T-cell (primary cell): ENCODE measurements at regions of chr4 and their contacts with region 1.

Region 1: DNA sequence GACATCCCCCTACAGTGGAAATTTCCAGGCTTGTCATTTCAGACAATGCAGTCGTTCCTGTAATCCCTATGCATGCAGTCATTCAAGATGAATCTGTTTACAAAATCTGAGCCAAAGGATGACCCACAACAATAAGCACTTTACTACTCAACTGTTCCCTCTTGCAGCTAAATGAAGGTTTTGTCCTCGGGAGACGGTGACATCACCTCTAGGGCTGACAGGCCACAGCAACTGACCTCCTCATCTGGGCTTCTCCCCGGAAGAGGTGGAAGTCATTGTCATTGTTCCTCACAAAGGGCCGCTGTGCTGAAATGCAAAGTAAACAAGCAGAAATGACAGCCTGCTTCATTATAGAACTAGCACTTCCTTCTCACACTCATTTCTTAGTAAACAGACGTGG is 29.2 kb downstream of the CLRN2 start:
- DNase-seq: no peak
- ATAC-seq: no peak
- H3K4me3 ChIP-seq: no peak overlapping the region
- H3K4me3 Mint-ChIP-seq: no peak overlapping the region
- H3K27ac ChIP-seq: no peak overlapping the region
- H3K27ac Mint-ChIP-seq: no peak overlapping the region
- H3K4me1 ChIP-seq: no peaks in the 10 kb centered on the region
- H3K4me1 Mint-ChIP-seq: peaks cover 1 to 5% (median 1%) of the 10 kb centered on the region in 3 donors
- H3K27me3 ChIP-seq: no peaks in the 10 kb centered on the region
- H3K27me3 Mint-ChIP-seq: peaks cover 18 to 22% of the 10 kb centered on the region in 2 donors

Region 2: DNA sequence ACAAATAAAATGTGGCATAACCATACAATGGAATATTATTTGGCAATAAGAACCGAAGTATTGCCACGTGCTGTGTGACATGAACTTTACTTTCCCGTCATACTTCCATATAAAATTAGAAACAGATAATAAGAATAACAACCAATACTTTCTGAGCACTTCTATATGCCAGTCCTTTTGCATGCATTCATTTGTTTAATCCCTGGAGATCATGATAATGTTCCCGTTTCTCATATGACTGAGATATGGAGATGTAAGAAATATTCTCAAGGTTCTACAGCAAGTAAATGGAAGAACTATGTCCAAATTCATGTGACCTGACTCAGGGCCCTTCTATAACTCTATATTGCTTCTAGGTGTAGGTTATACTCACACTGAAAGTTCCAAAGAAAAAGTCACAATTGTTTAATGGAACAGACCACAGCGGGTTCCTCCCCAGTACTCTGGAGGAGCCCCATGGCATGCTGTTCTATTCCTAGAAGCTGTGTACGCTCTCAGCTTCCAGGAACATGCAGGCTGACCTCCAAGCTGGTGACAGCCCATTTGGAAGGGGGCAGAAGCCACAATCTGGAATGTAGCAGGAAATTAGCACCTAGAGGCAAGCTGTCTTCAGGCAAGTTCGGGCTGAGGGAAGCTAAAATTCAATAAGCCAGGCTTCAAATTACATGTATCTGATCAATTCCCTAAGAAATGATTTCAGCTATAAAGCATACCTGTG is 63.8 kb before region 1 on chr4:
- CTCF ChIA-PET with region 1: no interaction called
- POLR2A ChIA-PET with region 1: no interaction called
- DNase-seq: no peak
- ATAC-seq: no peak
- H3K4me3 ChIP-seq: no peak overlapping the region
- H3K4me3 Mint-ChIP-seq: no peak overlapping the region
- H3K27ac ChIP-seq: no peak overlapping the region
- H3K27ac Mint-ChIP-seq: no peak overlapping the region
- H3K4me1 ChIP-seq: no peaks in the 10 kb centered on the region
- H3K4me1 Mint-ChIP-seq: peaks cover 0 to 2% (median 0%) of the 10 kb centered on the region in 3 donors
- H3K27me3 ChIP-seq: no peaks in the 10 kb centered on the region
- H3K27me3 Mint-ChIP-seq: no peaks in the 10 kb centered on the region

Region 3: GRCh38 chr4:17576932-17577665 is 32.9 kb after region 1 on chr4 and contains the start of gene LAP3:
- CTCF ChIA-PET with region 1: interaction called, 8 to 10 read pairs
- POLR2A ChIA-PET with region 1: interaction called in 1 of 2 experiments, 3 read pairs
- DNase-seq: peak; percentile 93 to 100 (median 98)
- ATAC-seq: peak; percentile 90 to 94 (median 93)
- H3K4me3 ChIP-seq: peak within 1 kb of the TSS; percentile 72 to 91
- H3K4me3 Mint-ChIP-seq: peak within 1 kb of the TSS; percentile 85 to 93 (median 89)
- H3K27ac ChIP-seq: peak within 1 kb of the TSS; percentile 85
- H3K27ac Mint-ChIP-seq: peak within 1 kb of the TSS; percentile 92 to 98
- H3K4me1 ChIP-seq: peaks cover 9 to 27% of the 10 kb centered on the region in 2 experiments
- H3K4me1 Mint-ChIP-seq: peaks cover 27 to 33% (median 28%) of the 10 kb centered on the region in 3 donors
- H3K27me3 ChIP-seq: no peaks in the 10 kb centered on the region
- H3K27me3 Mint-ChIP-seq: no peaks in the 10 kb centered on the region
- total RNA-seq, gene LAP3: 23.5 to 58.4 (median 25.1) TPM

Region 4: GRCh38 chr4:17614416-17615299 is 70.5 kb after region 1 on chr4 and contains the start of gene MED28:
- CTCF ChIA-PET with region 1: interaction called, 5 to 18 read pairs
- POLR2A ChIA-PET with region 1: no interaction called
- DNase-seq: peak; percentile 84 to 98 (median 93)
- ATAC-seq: peak; percentile 91 to 96 (median 95)
- H3K4me3 ChIP-seq: peak within 1 kb of the TSS; percentile 94 to 100
- H3K4me3 Mint-ChIP-seq: peak within 1 kb of the TSS; percentile 95 to 100 (median 99)
- H3K27ac ChIP-seq: peak within 1 kb of the TSS; percentile 82
- H3K27ac Mint-ChIP-seq: peak within 1 kb of the TSS; percentile 99 to 100
- H3K4me1 ChIP-seq: peaks cover 27 to 59% of the 10 kb centered on the region in 2 experiments
- H3K4me1 Mint-ChIP-seq: peaks cover 51 to 55% (median 53%) of the 10 kb centered on the region in 3 donors
- H3K27me3 ChIP-seq: no peaks in the 10 kb centered on the region
- H3K27me3 Mint-ChIP-seq: no peaks in the 10 kb centered on the region
- total RNA-seq, gene MED28: 50.6 to 75.5 (median 66.2) TPM

Region 5: GRCh38 chr4:17636696-17637622 is 92.8 kb after region 1 on chr4:
- CTCF ChIA-PET with region 1: interaction called, 17 to 19 read pairs
- POLR2A ChIA-PET with region 1: no interaction called
- DNase-seq: peak; percentile 15 to 80 (median 60)
- ATAC-seq: peak; percentile 76 to 80 (median 79)
- H3K4me3 ChIP-seq: no peak overlapping the region
- H3K4me3 Mint-ChIP-seq: no peak overlapping the region
- H3K27ac ChIP-seq: no peak overlapping the region
- H3K27ac Mint-ChIP-seq: no peak overlapping the region
- H3K4me1 ChIP-seq: peaks cover 0 to 6% of the 10 kb centered on the region in 2 experiments
- H3K4me1 Mint-ChIP-seq: no peaks in the 10 kb centered on the region
- H3K27me3 ChIP-seq: no peaks in the 10 kb centered on the region
- H3K27me3 Mint-ChIP-seq: no peaks in the 10 kb centered on the region

Region 6: DNA sequence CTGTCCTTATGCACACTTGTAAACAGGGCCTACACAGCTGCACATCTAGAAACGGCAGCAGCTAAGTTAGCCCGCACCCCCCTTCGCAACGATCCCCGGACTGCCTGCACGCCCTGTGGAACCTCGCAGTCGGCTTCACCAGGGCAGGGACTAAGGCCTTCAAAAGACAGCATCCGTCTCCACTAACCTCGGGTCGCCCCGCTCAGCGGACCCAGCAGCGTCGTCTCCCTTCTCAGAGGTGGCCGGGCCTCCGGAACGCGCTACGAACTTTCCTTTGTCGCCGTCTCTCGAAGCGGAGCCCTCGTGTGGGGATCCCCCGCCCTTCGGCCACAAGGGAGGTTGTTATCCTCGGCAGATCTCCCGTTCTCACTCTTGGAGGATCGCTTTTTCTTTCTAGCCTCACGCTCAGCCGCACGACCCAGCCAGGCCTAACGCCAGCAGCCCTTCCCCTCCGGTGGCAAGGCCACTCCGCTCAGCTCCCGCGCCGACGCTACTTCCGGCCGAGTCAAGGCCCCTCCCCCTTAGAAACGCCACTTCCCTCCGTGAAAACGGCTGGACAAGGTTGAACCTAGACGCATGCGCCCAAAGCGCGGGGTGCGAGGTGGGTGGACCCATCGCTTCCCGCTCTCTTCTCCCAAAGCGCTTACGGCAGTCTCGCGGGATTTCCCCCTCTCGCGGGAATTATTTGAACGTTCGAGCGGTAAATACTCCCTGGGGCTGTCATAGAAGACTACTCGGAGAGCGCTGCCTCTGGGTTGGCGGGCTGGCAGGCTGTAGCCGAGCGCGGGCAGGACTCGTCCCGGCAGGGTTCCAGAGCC is 266.3 kb after region 1 on chr4 and contains the starts of genes DCAF16 and NCAPG:
- CTCF ChIA-PET with region 1: interaction called, 13 to 26 read pairs
- POLR2A ChIA-PET with region 1: no interaction called
- DNase-seq: peak; percentile 94 to 100 (median 97)
- ATAC-seq: peak; percentile 92 to 95 (median 92)
- H3K4me3 ChIP-seq: peak within 1 kb of the TSS; percentile 91 to 93
- H3K4me3 Mint-ChIP-seq: peak within 1 kb of the TSS; percentile 95 to 100 (median 95)
- H3K27ac ChIP-seq: peak within 1 kb of the TSS; percentile 95
- H3K27ac Mint-ChIP-seq: peak within 1 kb of the TSS; percentile 94 to 99
- H3K4me1 ChIP-seq: peaks cover 16 to 31% of the 10 kb centered on the region in 2 experiments
- H3K4me1 Mint-ChIP-seq: peaks cover 57 to 68% (median 62%) of the 10 kb centered on the region in 3 donors
- H3K27me3 ChIP-seq: no peaks in the 10 kb centered on the region
- H3K27me3 Mint-ChIP-seq: no peaks in the 10 kb centered on the region
- total RNA-seq, gene DCAF16: 62.6 to 77.6 (median 73.2) TPM
- total RNA-seq, gene NCAPG: 0.73 to 1.8 (median 1.5) TPM

Region 7: DNA sequence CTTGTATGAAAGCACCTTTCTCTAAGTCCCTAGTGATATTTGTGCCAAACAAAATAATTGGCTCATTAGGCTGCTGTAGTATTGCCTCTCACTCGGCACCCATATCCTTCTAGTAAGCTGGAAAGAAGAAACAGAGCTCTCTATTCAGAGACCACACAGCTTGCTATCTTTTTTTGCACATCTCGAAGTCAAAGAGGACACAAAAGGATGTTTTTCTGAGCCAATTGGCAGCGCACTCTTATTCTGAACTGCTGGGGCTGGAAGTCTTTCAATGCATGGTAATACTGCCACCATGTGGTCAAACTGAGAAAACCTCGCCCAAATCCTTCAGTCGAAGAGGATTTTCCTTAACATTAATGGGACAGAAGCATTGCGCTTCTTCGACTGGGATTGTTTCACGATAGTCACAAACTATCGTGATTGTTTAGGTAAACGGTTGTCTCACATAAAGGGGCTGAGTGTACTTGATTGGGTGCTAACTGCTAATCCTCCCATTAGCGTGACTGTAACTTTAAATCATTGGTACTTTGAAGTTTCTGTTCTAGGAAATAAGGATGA is 1049.3 kb after region 1 on chr4:
- CTCF ChIA-PET with region 1: interaction called, 12 to 19 read pairs
- POLR2A ChIA-PET with region 1: no interaction called
- DNase-seq: peak in 32 of 35 experiments; percentile 0 to 77 (median 30)
- ATAC-seq: peak in 3 of 4 experiments; percentile 58 to 63 (median 59)
- H3K4me3 ChIP-seq: no peak overlapping the region
- H3K4me3 Mint-ChIP-seq: no peak overlapping the region
- H3K27ac ChIP-seq: no peak overlapping the region
- H3K27ac Mint-ChIP-seq: no peak overlapping the region
- H3K4me1 ChIP-seq: no peaks in the 10 kb centered on the region
- H3K4me1 Mint-ChIP-seq: peaks cover 5 to 6% (median 6%) of the 10 kb centered on the region in 3 donors
- H3K27me3 ChIP-seq: no peaks in the 10 kb centered on the region
- H3K27me3 Mint-ChIP-seq: peaks cover 19 to 23% of the 10 kb centered on the region in 2 donors